Activated CD8-positive, alpha-beta T cell treated with anti-CD3 and anti-CD28 coated beads, Interleukin-2, amount 10 ng/mL, durations not matched to agents 7 days and 5 days (primary cell): ENCODE measurements at regions of chr12 and their contacts with region 1.

Region 1: GRCh38 chr12:45215419-45216229 is at the start of gene ANO6:
- DNase-seq: peak; percentile 84
- ATAC-seq: peak; percentile 79
- H3K4me3 Mint-ChIP-seq: peak within 1 kb of the TSS; percentile 82
- H3K27ac Mint-ChIP-seq: peak within 1 kb of the TSS; percentile 83
- H3K4me1 Mint-ChIP-seq: peaks cover 45% of the 10 kb centered on the region
- H3K27me3 Mint-ChIP-seq: no peaks in the 10 kb centered on the region
- total RNA-seq, gene ANO6: 23.3 to 24.5 TPM

Region 2: DNA sequence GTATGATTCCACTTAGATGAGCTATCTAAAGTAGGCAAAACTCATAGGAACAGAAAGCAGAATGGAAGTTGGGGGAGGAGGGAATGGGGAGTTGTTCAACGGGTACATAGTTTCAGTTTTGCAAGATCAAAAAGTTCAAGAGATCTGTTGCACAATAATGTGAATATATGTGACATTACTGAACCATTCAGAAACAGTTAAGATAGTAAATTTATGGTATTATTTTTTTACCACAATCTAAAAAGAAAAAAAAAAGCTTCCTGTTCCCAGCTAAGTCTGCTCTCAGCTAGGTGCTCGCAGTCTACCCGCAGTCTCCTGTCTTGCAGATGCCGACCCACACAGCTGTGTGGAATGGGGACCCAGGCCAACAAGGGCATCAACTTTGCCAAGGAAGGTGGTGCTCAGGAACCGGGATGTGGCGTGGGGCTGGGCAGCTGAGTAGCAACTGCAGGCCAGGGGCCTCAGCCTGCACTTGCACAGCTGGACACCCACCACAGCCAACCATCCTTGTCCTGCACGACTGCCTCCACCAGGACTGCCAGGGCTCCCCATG is 15.1 kb before region 1 on chr12:
- CTCF ChIA-PET with region 1: interaction called, 14 read pairs
- POLR2A ChIA-PET with region 1: interaction called, 7 read pairs
- DNase-seq: no peak
- ATAC-seq: peak; percentile 53
- H3K4me3 Mint-ChIP-seq: peak overlapping the region; percentile 45
- H3K27ac Mint-ChIP-seq: no peak overlapping the region
- H3K4me1 Mint-ChIP-seq: peaks cover 17% of the 10 kb centered on the region
- H3K27me3 Mint-ChIP-seq: no peaks in the 10 kb centered on the region